ENCODE measurements at regions of chr6 and their contacts with region 1.

Region 1: GRCh38 chr6:106360410-106360988 is at the start of gene CRYBG1:
- DNase-seq: peak; percentile 28 to 48 (median 45)
- H3K4me3 ChIP-seq: peak within 1 kb of the TSS; percentile 22 to 69 (median 51)
- H3K27ac ChIP-seq: no peak within 1 kb of the TSS
- H3K4me1 ChIP-seq: peaks cover 0 to 15% (median 14%) of the 10 kb centered on the region in 4 experiments
- H3K27me3 ChIP-seq: peaks cover 14 to 53% (median 22%) of the 10 kb centered on the region in 5 experiments

Region 2: GRCh38 chr6:106069478-106069877 is 291.0 kb before region 1 on chr6:
- CTCF ChIA-PET with region 1: no interaction called
- POLR2A ChIA-PET with region 1: no interaction called
- DNase-seq: no peak
- H3K4me3 ChIP-seq: no peak overlapping the region
- H3K27ac ChIP-seq: no peak overlapping the region
- H3K4me1 ChIP-seq: no peaks in the 10 kb centered on the region
- H3K27me3 ChIP-seq: no peaks in the 10 kb centered on the region

Region 3: DNA sequence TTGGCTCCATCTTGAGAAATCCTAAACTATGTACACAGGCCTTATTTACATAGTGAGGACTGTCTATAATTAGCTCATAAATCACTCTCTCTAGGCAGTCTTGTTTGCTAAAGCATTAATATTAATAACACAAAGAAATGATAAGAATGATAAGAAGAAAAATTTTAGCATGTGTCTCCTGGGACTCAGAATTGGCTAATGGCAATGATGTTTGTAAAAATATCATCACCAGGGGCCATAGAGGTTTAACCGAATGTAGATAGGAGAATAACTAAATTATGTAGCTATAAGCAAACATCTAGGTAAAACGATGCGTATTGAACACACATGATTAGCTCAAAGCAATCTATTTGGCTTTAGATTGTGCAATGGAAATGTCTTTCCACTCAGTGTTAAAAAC is 13.2 kb before region 1 on chr6:
- CTCF ChIA-PET with region 1: interaction called, 12 read pairs
- POLR2A ChIA-PET with region 1: no interaction called
- DNase-seq: no peak
- H3K4me3 ChIP-seq: no peak overlapping the region
- H3K27ac ChIP-seq: no peak overlapping the region
- H3K4me1 ChIP-seq: no peaks in the 10 kb centered on the region
- H3K27me3 ChIP-seq: no peaks in the 10 kb centered on the region

Measured in common myeloid progenitor, CD34-positive (primary cell).